ENCODE measurements at regions of chr3 and their contacts with region 1.

Region 1: GRCh38 chr3:125334675-125335560 is 40.2 kb downstream of the ZNF148 start:
- DNase-seq: no peak
- H3K4me3 ChIP-seq: no peak overlapping the region
- H3K27ac ChIP-seq: no peak overlapping the region
- H3K4me1 ChIP-seq: peaks cover 8% of the 10 kb centered on the region
- H3K27me3 ChIP-seq: no peaks in the 10 kb centered on the region
- CTCF ChIP-seq: no peak
- EP300 ChIP-seq: no peak
- POLR2A ChIP-seq: no peak

Region 2: GRCh38 chr3:124552239-124552638 is 782.7 kb before region 1 on chr3:
- intact Hi-C with region 1: no loop called
- DNase-seq: no peak
- H3K4me3 ChIP-seq: no peak overlapping the region
- H3K27ac ChIP-seq: no peak overlapping the region
- H3K4me1 ChIP-seq: no peaks in the 10 kb centered on the region
- H3K27me3 ChIP-seq: no peaks in the 10 kb centered on the region
- CTCF ChIP-seq: no peak
- EP300 ChIP-seq: no peak
- POLR2A ChIP-seq: no peak

Region 3: GRCh38 chr3:125192190-125193035 is 142.5 kb before region 1 on chr3:
- intact Hi-C with region 1: no loop called
- DNase-seq: no peak
- H3K4me3 ChIP-seq: no peak overlapping the region
- H3K27ac ChIP-seq: no peak overlapping the region
- H3K4me1 ChIP-seq: no peaks in the 10 kb centered on the region
- H3K27me3 ChIP-seq: no peaks in the 10 kb centered on the region
- CTCF ChIP-seq: no peak
- EP300 ChIP-seq: no peak
- POLR2A ChIP-seq: no peak

Region 4: GRCh38 chr3:125322166-125322565 is 12.8 kb before region 1 on chr3:
- intact Hi-C with region 1: loop called in 1 of 4 experiments (anchors 1 kb)
- DNase-seq: no peak
- H3K4me3 ChIP-seq: no peak overlapping the region
- H3K27ac ChIP-seq: no peak overlapping the region
- H3K4me1 ChIP-seq: no peaks in the 10 kb centered on the region
- H3K27me3 ChIP-seq: no peaks in the 10 kb centered on the region
- CTCF ChIP-seq: no peak
- EP300 ChIP-seq: no peak
- POLR2A ChIP-seq: no peak

Measured in ovary (tissue), 10 donors.